ENCODE measurements at regions of chr6 and their contacts with region 1.

Region 1: GRCh38 chr6:139510040-139510790 is 135.8 kb upstream of the CITED2 start:
- DNase-seq: peak; percentile 54
- ATAC-seq: peak; percentile 96

Region 2: GRCh38 chr6:139433631-139434419 is 76.4 kb before region 1 on chr6:
- intact Hi-C with region 1: no loop called
- DNase-seq: no peak
- ATAC-seq: no peak

Region 3: DNA sequence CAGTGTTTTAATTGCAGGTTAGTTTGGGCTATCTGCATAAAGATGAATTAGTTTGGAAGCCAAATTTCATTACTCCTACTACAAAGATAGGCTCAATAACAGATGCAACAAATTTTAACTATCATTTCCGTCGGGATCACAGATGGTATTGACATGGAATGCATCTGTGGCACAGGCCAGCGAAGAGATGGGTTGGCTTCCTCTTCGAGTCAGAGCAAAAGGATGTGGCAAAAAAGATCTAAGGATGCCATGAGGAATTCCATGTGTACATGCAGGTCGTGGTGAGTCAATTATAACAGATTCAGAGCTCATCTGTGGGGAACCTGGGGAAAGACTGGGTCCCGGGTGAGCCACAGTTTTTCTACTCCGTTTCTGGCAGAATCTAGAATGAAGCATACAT is 52.7 kb before region 1 on chr6:
- intact Hi-C with region 1: no loop called
- DNase-seq: no peak
- ATAC-seq: no peak

Region 4: GRCh38 chr6:139973669-139974344 is 463.6 kb after region 1 on chr6:
- intact Hi-C with region 1: loop called (anchors 5 kb)
- DNase-seq: no peak
- ATAC-seq: peak; percentile 77

Region 5: GRCh38 chr6:140436013-140436811 is 926.0 kb after region 1 on chr6:
- intact Hi-C with region 1: loop called (anchors 1 kb)
- DNase-seq: no peak
- ATAC-seq: no peak